ENCODE measurements at regions of chr3 and their contacts with region 1.

Region 1: DNA sequence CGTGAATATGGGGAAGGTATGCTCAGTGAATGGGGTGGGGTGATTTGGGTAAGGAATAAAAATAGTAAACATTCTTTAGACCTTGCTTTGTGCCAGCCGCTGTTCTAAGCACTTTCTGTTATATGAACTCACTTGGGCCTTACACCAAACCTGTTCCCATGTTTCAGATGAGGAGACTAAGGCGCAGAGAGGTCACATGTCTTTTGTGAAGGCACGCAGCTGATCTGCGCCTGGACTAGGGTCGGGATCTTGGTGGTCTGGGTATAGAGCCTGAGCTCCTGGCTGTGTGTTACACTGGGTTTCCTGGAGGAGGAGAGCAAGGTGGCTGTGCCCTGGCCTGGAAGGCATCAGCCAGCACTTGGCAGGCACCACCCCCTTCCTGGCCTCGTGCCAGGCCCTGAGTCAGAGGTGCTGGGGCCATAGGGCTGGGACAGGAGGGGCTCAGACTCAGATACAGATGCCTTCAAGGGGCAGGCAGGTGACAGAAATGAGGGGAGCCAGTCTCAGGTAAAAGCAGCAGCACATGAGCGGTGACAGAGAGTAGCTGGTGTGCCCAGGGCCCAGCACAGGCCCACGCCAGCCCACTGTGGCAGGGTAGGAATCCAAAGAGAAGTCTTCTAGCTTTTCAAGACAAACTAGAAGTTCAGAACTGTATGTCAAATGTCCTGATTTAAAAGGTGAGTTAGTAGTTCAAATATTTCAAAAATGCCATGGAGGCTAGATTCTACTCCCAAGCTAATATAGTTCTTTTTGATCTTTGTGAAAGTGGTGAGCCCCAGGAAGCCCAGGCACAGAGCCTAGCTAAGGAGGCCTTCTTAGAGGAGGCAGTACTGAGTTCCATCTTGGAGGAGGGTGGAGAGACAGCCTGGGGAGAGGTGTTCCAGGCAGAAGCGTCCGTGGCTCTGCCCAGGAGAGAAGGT is 83.1 kb downstream of the DNAJB8 start:
- DNase-seq: peak; percentile 63
- H3K4me3 ChIP-seq: no peak overlapping the region
- H3K27ac ChIP-seq: peak overlapping the region; percentile 70 to 79
- H3K4me1 ChIP-seq: peaks cover 25% of the 10 kb centered on the region
- H3K27me3 ChIP-seq: no peaks in the 10 kb centered on the region
- CTCF ChIP-seq: no peak
- POLR2A ChIP-seq: no peak

Region 2: DNA sequence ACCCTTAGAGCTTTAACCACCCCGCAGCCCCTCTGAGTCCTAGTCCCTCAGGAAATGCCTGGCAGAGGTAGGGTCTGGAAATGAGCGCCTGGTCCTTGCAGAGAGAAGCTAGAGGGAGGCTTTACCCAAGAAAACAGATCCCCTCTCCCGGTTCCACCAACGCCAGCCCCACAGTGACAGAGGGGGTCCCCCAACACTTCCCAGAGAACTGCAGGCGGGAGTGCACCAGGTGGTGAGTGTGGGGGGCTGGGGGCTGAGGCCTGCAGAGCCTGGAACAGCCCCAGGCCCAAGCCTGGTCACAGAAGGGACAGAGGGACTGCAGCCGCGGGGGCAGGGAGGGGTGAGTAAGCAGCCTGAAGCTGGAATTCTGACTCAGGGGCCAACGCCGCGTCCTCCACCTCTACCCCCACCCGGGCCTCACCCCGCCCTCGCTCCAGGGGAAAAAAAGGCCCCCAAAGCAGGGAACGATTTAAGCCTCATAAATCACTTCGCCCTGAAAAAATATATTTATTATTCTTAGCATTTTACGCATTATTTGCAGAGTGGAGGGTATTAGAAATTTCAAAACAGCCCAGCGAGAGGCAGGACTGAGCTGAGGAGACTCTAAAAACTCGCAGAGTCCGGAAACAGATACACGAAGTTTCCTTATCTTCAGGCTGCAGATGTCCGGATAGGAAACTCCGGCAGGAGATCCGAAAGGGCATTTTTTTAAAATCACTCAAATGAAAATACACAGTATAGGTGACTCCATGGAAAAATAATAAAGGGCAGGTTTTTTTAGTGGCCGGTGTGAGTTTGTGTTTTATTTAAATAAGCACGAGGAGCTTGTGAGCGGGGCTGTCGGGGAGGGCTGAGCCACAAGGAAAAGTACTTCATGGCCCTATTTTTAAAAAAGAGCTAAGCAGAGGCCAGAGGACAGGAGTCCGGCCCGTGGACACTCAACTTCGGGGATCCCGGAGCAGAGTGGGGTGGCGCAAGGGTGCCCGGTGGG is 99.4 kb after region 1 on chr3:
- intact Hi-C with region 1: loop called (anchors 5 kb)
- DNase-seq: no peak
- H3K4me3 ChIP-seq: peak overlapping the region; percentile 85 to 93
- H3K27ac ChIP-seq: peak overlapping the region; percentile 99
- H3K4me1 ChIP-seq: peaks cover 22% of the 10 kb centered on the region
- H3K27me3 ChIP-seq: no peaks in the 10 kb centered on the region
- CTCF ChIP-seq: no peak
- POLR2A ChIP-seq: no peak